Cardiac septum (tissue), 1 donor: ENCODE measurements at regions of chrX and their contacts with region 1.

Region 1: GRCh38 chrX:11143931-11144678 is 33.0 kb downstream of the HCCS start:
- DNase-seq: no peak

Region 2: DNA sequence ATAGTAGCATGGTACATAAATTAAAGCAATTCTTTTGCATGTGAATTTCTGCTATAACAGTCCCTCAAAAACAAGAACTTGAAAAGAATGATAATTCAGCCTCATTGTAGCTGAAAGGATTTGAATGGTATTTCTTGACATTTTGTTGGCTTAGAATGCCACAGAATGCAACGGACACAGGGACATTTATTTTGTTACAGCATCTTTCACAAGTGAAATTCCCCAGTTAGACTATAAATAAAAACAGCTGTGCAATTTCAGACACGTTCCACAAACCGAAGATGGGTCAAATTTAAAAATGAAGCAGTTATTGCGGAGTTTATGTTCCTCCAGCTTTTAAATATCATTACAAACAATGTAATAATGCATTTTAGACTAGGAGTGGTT is 66.3 kb after region 1 on chrX:
- intact Hi-C with region 1: no loop called
- DNase-seq: no peak

Region 3: GRCh38 chrX:11244636-11245035 is 100.5 kb after region 1 on chrX:
- intact Hi-C with region 1: no loop called
- DNase-seq: no peak

Region 4: DNA sequence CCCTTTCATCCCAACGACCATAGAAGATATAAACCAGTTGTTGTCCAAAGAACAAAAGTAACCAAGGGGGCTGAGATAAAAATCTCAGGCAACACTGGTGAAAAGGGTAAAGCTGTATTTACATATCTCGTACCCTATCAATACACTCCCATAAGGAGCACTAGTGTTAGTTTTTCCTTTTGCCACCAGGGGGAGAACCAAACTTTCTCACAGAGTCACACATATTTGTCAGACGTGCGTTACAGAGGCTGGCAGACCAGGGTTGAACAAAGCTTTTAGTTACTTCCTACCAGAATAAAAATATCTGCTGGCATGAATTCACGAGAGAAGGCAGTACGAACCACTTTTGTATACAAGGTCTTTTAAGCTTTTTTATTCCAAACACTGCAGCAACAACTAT is 237.4 kb after region 1 on chrX:
- intact Hi-C with region 1: loop called (anchors 10 kb)
- DNase-seq: no peak

Region 5: DNA sequence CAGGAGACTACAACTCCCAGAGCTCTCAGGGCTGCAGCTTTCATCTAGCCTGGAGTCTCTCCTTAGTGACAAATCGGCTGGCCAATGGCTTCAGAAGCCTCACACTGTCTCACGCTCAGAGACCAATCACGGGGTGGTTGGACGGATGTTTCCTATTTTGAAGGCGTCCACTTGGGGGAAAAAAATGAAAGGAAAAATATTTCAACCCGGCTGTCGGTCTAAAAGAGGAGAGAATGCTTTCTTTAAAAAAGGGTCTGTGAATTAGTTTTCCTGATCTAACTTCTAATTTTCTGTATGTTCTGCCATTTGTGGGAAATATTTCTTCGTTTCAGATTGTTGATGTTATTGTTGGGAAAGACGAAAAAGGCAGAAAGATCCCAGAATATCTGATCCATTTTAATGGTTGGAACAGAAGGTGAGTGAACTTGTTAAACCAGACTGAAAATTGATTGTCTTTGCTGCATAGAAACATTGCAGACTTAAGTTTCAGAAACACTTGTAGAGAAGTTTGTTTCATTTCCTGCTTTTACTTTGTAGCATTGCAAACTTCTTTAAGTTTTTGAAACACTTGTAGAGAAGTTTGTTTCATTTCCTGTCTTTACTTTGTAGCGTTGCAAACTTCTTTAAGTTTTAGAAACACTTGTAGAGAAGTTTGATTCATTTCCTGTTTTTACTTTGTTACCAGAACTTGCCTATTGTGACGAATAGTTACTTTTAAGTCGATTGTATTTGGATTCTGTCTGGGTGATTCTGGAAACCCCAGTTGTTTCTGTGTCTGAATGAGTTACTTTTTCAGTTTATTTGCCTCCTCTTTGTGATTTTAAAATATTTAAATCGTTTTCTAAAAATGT is 615.6 kb after region 1 on chrX:
- intact Hi-C with region 1: loop called (anchors 10 kb)
- DNase-seq: peak; percentile 91